ENCODE measurements at regions of chr20 and their contacts with region 1.

Region 1: GRCh38 chr20:17569616-17570346 is at the start of gene DSTN:
- DNase-seq: peak; percentile 93
- H3K4me3 ChIP-seq: peak within 1 kb of the TSS; percentile 98
- H3K27ac ChIP-seq: peak within 1 kb of the TSS; percentile 99
- H3K4me1 ChIP-seq: peaks cover 9% of the 10 kb centered on the region
- H3K27me3 ChIP-seq: no peaks in the 10 kb centered on the region
- CTCF ChIP-seq: no peak
- total RNA-seq, gene DSTN: 247 to 437 TPM

Region 2: DNA sequence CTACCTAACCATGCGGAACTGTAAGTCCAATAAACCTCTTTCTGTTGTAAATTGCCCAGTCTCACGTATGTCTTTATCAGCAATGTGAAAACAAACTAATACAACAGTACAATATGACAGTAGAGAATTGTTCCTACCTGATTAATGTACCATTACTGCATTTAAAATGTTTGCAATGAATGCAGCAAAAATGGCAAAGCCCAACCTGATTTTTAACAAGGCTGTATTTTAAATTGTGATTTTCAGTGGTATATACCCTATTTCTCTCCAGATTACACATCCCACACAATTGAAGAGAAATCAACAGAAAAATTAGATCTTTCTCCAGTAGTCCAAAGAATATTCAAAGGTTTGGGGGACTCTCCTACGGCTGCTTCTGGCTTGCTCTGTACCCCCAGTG is 346.2 kb before region 1 on chr20:
- intact Hi-C with region 1: no loop called
- DNase-seq: no peak
- H3K4me3 ChIP-seq: no peak overlapping the region
- H3K27ac ChIP-seq: no peak overlapping the region
- H3K4me1 ChIP-seq: no peaks in the 10 kb centered on the region
- H3K27me3 ChIP-seq: peaks cover 30% of the 10 kb centered on the region
- CTCF ChIP-seq: no peak

Region 3: DNA sequence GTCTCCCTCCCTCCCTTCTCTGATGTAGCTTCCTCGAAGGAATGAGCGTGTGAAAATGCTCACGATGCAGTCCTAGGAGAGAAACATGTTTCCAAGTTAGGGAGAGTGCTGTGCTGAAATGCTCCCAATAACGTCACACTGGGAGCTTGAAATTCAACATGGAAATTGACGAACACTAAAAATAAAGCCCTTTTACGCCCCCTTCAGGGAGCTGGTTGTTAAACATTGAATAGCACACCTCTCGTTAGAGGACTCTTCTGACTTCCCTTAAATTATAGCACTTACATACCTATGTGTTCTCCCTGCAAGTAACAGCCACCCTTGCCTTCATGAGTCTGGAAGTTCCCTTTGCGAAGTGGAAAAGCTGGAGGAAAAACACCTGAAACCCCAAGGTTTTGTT is 127.2 kb before region 1 on chr20:
- intact Hi-C with region 1: no loop called
- DNase-seq: no peak
- H3K4me3 ChIP-seq: no peak overlapping the region
- H3K27ac ChIP-seq: no peak overlapping the region
- H3K4me1 ChIP-seq: no peaks in the 10 kb centered on the region
- H3K27me3 ChIP-seq: no peaks in the 10 kb centered on the region
- CTCF ChIP-seq: no peak

Region 4: GRCh38 chr20:17611540-17612286 is 41.9 kb after region 1 on chr20:
- intact Hi-C with region 1: loop called (anchors 5 kb)
- DNase-seq: peak; percentile 67
- H3K4me3 ChIP-seq: no peak overlapping the region
- H3K27ac ChIP-seq: peak overlapping the region; percentile 23
- H3K4me1 ChIP-seq: peaks cover 22% of the 10 kb centered on the region
- H3K27me3 ChIP-seq: no peaks in the 10 kb centered on the region
- CTCF ChIP-seq: peak; percentile 5